Right cardiac atrium (tissue), 5 donors: ENCODE measurements at regions of chr5 and their contacts with region 1.

Region 1: DNA sequence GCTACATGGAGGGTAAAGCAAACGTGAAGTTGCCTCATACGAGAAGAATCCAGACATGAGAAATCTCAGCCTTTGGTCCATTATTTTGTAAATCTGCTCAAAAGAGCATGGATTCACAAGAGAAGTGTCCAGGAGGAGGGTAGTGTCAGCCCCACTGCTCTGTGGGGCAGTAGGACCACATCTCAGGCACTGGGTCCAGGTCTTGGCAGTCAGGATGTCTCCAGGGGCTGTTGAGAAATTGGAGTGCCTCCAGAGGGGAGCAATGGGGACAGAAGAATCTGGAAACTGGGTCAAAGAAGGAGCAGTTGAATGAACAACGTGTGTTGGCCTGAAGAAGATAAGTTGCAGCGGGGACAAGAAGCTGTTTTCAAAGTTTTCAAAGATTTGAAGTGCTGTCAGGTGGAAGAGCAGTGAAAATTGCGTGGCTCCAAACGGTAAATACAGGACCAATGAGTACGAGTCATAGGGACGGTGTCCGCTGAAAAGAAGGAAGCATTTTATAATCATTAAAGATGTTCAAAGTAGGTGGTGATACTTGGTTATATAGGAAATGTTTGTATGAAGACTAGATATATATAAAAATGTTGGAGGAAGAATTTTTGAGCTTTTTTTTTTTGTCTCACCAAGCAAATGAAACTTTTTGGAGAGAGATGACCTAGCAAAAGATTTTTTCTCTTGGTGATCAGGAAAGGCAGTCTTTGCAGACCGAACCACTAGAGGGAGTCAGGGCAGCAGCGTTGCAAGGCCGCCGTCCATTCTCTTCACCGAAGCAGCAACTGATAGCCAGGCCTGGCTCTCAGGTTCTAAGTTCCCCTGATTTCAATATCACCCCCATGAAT is 57.1 kb upstream of the ZBED3 start:
- DNase-seq: peak; percentile 62 to 83 (median 81)
- ATAC-seq: peak; percentile 69 to 80
- H3K4me3 ChIP-seq: no peak overlapping the region
- H3K27ac ChIP-seq: no peak overlapping the region
- H3K4me1 ChIP-seq: no peaks in the 10 kb centered on the region
- H3K27me3 ChIP-seq: no peaks in the 10 kb centered on the region

Region 2: GRCh38 chr5:77210091-77210963 is 66.1 kb after region 1 on chr5 and contains the start of gene PDE8B:
- intact Hi-C with region 1: loop called in 1 of 4 experiments (anchors 10 kb)
- DNase-seq: peak in 2 of 3 donors; percentile 71 to 76
- ATAC-seq: peak; percentile 75 to 77
- H3K4me3 ChIP-seq: peak within 1 kb of the TSS; percentile 95
- H3K27ac ChIP-seq: peak within 1 kb of the TSS; percentile 26
- H3K4me1 ChIP-seq: no peaks in the 10 kb centered on the region
- H3K27me3 ChIP-seq: no peaks in the 10 kb centered on the region
- total RNA-seq, gene PDE8B: 35.8 to 71.2 (median 46.5) TPM